Activated B cell treated with CpG ODN at 0.5 μM for 24 hours (primary cell): ENCODE measurements at regions of chr10 and their contacts with region 1.

Region 1: DNA sequence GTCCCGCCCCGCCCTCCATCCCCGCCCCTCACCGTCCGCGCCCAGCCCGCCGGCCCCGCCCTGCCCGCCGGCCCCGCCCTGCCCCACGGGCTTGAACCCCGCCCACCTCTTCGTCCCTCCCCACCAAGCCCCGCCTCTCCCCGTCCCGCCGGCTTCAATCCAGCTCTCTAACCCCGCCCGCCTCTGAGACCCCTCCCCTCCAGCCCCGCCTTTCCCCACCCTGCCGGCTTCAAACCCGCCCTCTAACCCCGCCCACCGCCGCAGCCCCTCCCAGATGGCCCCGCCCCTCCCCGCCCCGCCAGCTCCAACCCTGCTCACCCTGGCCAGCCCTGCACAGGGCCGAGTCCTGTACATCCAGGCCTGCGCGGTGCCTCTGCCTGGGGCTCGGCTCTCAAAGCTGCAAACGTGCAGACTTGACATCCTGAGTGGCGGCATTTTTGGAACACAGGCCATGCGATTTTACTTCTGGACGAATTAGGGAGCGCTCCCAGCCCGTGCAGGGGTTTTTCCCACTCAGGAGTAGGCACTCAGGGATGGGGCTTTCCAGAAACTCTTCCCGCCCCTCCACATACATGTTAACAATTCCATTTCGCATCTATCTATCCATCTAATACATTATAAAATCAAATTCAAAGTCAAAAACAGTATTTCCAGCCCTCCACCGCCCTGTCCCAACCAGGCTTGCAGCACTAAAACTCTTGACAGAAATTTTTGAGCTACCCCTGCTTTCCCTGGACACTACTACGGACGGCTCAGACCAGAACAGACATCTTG is 475 bp upstream of the NMT2 start:
- DNase-seq: peak; percentile 79
- ATAC-seq: peak; percentile 89
- H3K4me3 Mint-ChIP-seq: peak overlapping the region; percentile 58
- H3K27ac Mint-ChIP-seq: no peak overlapping the region
- H3K4me1 Mint-ChIP-seq: peaks cover 26% of the 10 kb centered on the region
- H3K27me3 Mint-ChIP-seq: no peaks in the 10 kb centered on the region
- CTCF ChIP-seq: no peak

Region 2: GRCh38 chr10:13348216-13349017 is 1820.6 kb before region 1 on chr10 and contains the start of gene SEPHS1:
- CTCF ChIA-PET with region 1: no interaction called
- POLR2A ChIA-PET with region 1: no interaction called
- intact Hi-C with region 1: loop called (anchors 5 kb)
- DNase-seq: peak; percentile 65
- ATAC-seq: peak; percentile 66
- H3K4me3 Mint-ChIP-seq: peak within 1 kb of the TSS; percentile 89
- H3K27ac Mint-ChIP-seq: peak within 1 kb of the TSS; percentile 88
- H3K4me1 Mint-ChIP-seq: peaks cover 59% of the 10 kb centered on the region
- H3K27me3 Mint-ChIP-seq: peaks cover 8% of the 10 kb centered on the region
- CTCF ChIP-seq: no peak
- total RNA-seq, gene SEPHS1: 36.7 and 38.0 TPM in 2 replicates

Region 3: DNA sequence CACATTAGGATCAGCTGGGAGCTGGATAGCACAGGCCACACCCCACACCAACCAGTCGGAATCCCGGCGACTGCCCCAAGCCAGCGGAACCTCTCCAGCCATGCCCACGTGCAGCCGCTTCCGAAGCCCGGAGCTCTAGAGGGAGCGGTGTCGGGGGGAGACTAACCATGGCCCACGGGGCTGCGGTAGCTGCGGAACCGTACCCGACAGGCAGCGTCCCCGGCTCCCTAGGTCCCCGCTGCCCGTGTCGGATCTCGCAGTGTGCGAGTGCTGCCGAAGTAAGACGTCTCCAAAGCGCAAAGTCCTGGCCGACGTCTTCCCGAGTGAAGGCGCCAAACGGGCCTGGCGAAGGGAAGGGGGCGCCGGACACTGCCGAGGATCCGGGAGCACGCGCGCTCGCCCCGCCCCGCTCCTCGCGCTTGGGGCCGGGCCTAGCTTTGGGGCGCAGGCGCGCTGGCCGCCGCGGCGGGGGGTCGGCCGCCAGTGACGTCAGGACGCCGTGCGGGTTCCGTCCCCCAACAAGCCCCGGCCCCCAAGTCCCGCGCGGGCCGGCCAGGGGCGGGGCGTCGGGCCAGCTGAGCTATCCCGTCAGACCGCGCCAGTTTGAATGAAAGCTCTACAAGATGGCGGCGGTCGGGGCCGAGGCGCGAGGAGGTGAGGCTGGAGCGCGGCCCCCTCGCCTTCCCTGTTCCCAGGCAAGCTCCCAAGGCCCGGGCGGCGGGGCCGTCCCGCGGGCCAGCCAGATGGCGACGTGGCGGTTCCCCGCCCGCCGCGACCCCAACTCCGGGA is 290.5 kb before region 1 on chr10 and contains the start of gene SUV39H2:
- CTCF ChIA-PET with region 1: no interaction called
- POLR2A ChIA-PET with region 1: interaction called, 3 read pairs
- intact Hi-C with region 1: loop called (anchors 2 kb)
- DNase-seq: peak; percentile 93
- ATAC-seq: peak; percentile 93
- H3K4me3 Mint-ChIP-seq: peak within 1 kb of the TSS; percentile 94
- H3K27ac Mint-ChIP-seq: peak within 1 kb of the TSS; percentile 86
- H3K4me1 Mint-ChIP-seq: peaks cover 25% of the 10 kb centered on the region
- H3K27me3 Mint-ChIP-seq: no peaks in the 10 kb centered on the region
- CTCF ChIP-seq: no peak
- total RNA-seq, gene SUV39H2: 7.4 and 8.1 TPM in 2 replicates

Region 4: GRCh38 chr10:15097011-15097812 is 71.8 kb before region 1 on chr10 and contains the start of gene RPP38:
- CTCF ChIA-PET with region 1: no interaction called
- POLR2A ChIA-PET with region 1: interaction called, 13 read pairs
- intact Hi-C with region 1: loop called (anchors 1 kb)
- DNase-seq: peak; percentile 97
- ATAC-seq: peak; percentile 83
- H3K4me3 Mint-ChIP-seq: peak within 1 kb of the TSS; percentile 96
- H3K27ac Mint-ChIP-seq: peak within 1 kb of the TSS; percentile 93
- H3K4me1 Mint-ChIP-seq: peaks cover 29% of the 10 kb centered on the region
- H3K27me3 Mint-ChIP-seq: no peaks in the 10 kb centered on the region
- CTCF ChIP-seq: no peak
- total RNA-seq, gene RPP38: 21.2 and 27.9 TPM in 2 replicates

Region 5: GRCh38 chr10:15141136-15142054 is 27.6 kb before region 1 on chr10:
- CTCF ChIA-PET with region 1: interaction called, 11 read pairs
- POLR2A ChIA-PET with region 1: interaction called, 39 read pairs
- intact Hi-C with region 1: loop called (anchors 1 kb)
- DNase-seq: peak; percentile 32
- ATAC-seq: peak; percentile 94
- H3K4me3 Mint-ChIP-seq: peak overlapping the region; percentile 74
- H3K27ac Mint-ChIP-seq: peak overlapping the region; percentile 69
- H3K4me1 Mint-ChIP-seq: peaks cover 40% of the 10 kb centered on the region
- H3K27me3 Mint-ChIP-seq: no peaks in the 10 kb centered on the region
- CTCF ChIP-seq: no peak

Region 6: DNA sequence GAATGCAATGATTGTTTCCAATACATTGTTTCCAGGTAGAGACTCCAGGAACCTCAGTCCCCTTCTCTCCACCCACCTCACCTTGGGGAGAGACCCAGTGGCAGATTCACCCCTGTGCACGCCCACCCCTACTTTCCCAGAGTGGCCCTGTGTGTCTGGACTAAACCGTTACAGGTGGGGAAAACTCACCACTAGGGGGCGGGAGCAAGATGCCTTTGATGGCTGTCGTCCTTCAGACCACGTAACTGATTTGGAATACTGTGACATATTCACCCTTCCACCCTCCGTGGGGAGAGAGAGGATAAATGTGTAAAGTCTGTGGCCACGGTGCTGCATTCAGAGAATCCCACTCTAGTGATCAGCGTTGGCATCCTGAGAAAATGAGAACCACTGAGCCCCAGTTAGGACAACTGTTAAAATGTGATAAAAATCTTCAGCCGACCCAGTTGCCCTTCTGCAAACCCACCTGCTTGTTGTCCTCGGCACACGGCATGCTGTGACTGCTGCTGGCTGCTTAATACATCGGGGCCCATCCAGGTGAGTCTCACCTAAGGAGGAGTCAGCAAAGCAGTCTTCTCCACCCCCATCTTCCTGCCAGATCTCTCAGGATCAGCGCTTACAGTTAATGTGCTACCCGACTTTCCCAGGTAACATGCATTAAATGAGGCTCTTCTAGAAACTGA is 41.0 kb after region 1 on chr10:
- CTCF ChIA-PET with region 1: interaction called, 4 read pairs
- POLR2A ChIA-PET with region 1: no interaction called
- intact Hi-C with region 1: loop called (anchors 1 kb)
- DNase-seq: peak; percentile 50
- ATAC-seq: peak; percentile 64
- H3K4me3 Mint-ChIP-seq: no peak overlapping the region
- H3K27ac Mint-ChIP-seq: no peak overlapping the region
- H3K4me1 Mint-ChIP-seq: peaks cover 22% of the 10 kb centered on the region
- H3K27me3 Mint-ChIP-seq: no peaks in the 10 kb centered on the region
- CTCF ChIP-seq: peak; percentile 75